ENCODE measurements at regions of chr15 and their contacts with region 1.

Region 1: DNA sequence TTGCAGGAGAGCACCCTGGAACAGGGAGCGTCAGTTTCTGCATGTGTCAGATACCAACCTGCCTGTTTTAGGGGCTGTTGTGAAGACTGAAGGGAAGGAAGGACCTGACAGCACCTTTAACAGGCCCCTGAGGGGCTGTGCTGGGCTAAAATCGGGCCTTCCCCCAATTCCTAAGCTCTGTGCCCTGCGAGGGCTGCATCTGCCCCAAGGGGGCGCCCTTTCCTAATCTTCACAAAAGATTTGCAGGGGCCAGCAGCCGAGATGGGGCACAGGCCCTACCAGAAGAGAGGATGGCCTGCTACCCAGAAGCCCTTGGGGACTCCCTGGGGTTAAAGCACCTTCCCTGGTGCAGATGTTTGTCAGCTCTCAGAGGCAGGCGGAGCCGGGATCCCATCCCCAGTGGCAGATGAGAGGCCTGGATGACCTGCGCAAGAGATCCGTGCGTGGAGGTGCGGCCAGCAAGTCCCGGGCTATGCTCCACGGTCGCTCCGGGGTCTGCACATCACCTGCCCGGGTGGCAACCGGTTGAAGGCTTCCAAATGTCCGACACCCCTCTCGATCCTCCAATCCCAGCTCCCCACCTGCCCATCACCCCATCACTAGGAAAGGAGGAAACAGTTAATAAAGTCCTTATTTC is 53.6 kb downstream of the RHCG start:
- DNase-seq: peak; percentile 35 to 94 (median 76)

Region 2: DNA sequence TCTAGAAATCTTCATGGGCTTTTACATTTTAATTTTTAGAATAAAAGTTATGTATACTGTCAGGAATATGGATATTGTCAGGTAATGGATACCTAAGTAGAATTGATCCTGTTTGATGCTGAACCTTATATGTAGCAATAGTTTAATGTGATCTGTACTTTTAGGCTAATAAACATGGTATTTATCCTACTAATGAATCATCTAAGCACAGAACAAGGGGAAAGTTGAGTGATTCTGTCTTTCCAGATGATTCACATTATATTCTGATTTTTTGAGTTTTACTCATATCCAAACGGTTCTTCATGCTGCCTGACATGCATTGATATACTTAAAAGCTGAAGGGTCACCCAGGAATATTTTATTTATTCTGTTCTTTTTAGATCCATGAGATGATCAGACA is 164.5 kb before region 1 on chr15:
- intact Hi-C with region 1: no loop called
- DNase-seq: no peak

Region 3: DNA sequence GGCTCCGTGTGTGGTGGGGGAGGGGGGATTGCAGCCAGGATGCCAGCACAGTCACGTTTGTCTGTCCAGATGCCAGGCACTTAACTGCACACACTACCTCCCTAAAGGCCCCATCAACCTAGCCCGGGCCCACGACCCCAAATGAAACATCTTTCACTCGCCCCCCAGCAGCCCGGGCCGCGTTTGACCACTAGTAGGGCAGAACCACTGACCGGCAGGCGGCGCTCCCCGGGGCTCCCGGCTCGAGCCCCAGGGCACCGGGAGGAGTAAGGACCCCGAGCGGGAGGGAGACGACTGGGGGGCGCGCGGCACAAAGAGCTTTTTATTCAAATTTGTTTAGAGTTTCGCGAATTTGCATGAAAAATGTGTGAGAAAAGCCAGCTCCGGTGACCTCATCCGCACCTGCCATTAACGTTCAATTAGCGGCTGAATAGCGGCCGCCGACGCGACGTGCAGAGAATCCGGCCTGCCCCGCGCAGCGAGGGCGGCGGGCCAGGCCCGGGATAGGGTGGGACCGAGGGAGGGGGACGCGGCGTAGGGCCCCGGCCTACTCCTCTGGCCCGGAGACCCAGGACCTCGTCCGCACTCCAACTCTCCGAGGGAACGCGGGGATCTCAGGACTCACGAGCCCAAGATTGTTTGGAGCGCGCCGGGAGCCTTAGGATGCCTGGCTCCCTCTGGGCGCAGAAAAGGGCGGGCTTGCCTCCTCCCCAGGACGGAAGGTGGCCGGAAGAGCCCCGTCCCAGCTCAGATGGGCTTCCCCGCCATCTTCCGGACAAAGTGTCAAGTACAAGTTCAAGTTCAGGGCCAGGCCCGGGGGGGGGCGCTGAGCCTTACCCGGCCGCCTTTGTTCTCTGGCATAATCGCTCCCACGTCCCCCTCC is 43.3 kb before region 1 on chr15:
- intact Hi-C with region 1: no loop called
- DNase-seq: peak in 5 of 10 donors; percentile 38 to 92 (median 81)

Region 4: GRCh38 chr15:89556413-89557262 is 113.8 kb after region 1 on chr15:
- intact Hi-C with region 1: loop called (anchors 10 kb)
- DNase-seq: peak in 4 of 10 donors; percentile 37 to 55 (median 40)